Dendritic cell treated with granulocyte-macrophage colony-stimulating factor and Interleukin-4, amounts not matched to agents 40 ng/mL and 50 ng/mL, for 4 days (primary cell): ENCODE measurements at regions of chr6 and their contacts with region 1.

Region 1: GRCh38 chr6:138403801-138404661 is at the start of gene HEBP2:
- H3K4me3 Mint-ChIP-seq: peak within 1 kb of the TSS; percentile 80
- H3K27ac Mint-ChIP-seq: peak within 1 kb of the TSS; percentile 79
- H3K4me1 Mint-ChIP-seq: peaks cover 44% of the 10 kb centered on the region
- H3K27me3 Mint-ChIP-seq: peaks cover 5% of the 10 kb centered on the region

Region 2: DNA sequence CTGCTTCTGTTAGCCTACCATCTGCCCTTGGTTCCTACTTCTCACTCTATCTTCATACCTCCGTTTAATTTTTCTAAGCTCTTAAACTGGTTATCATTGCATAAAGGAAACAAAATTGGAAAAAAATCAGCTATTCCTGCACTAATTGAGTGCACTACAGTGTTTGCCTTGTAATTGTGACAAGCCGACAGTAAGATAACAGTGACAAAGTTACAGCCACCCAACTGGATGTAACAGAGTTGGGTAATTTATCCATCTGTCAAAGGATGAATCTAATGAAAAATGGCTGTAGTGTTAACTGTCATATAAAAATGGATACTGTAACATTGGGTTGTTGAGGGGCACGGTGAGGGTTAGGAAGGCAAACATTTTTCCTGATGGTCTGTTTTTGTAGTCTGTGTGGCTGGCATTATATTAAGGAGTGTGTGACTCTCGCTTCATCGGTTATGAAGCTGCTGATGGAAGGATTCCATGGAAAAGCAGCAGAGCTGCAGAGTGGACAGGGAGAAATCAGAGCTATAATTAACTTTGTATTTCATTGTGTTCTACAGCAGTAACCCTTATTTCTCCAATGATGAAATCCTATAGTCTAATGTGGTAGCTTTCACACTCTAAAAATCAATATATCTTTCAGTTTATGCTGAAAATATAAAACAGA is 198.5 kb before region 1 on chr6:
- intact Hi-C with region 1: no loop called
- H3K4me3 Mint-ChIP-seq: no peak overlapping the region
- H3K27ac Mint-ChIP-seq: no peak overlapping the region
- H3K4me1 Mint-ChIP-seq: no peaks in the 10 kb centered on the region
- H3K27me3 Mint-ChIP-seq: peaks cover 13% of the 10 kb centered on the region

Region 3: GRCh38 chr6:138773177-138774091 is 369.4 kb after region 1 on chr6 and contains the start of gene CCDC28A:
- intact Hi-C with region 1: loop called (anchors 10 kb)
- H3K4me3 Mint-ChIP-seq: peak within 1 kb of the TSS; percentile 100
- H3K27ac Mint-ChIP-seq: peak within 1 kb of the TSS; percentile 100
- H3K4me1 Mint-ChIP-seq: peaks cover 13% of the 10 kb centered on the region
- H3K27me3 Mint-ChIP-seq: no peaks in the 10 kb centered on the region